ENCODE measurements at regions of chrX and their contacts with region 1.

Region 1: DNA sequence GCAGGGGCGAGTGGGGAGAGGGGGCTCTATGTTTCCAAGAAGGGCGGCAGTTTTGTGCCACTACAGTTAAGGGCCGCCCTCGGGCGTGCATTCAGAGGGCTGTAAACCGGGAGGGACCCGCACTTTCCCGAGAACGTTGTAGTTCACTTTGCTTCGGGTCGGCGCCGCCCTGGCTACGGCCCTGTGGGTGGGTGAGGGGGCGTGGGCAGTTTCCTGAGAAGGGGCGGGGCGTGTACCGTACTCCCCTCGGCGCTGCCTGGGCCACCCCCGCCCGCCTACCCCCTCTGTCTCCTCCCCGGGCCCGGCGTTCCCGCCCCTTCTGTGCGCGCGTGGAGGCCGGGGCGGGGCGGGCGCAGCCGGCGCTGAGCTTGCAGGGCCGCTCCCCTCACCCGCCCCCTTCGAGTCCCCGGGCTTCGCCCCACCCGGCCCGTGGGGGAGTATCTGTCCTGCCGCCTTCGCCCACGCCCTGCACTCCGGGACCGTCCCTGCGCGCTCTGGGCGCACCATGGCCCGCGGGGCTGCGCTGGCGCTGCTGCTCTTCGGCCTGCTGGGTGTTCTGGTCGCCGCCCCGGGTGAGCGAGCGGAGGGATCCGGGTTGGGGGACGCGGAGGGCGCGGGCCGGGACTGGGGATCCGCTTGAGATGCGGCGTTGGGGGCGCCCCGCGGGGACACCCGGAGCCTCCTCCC is at the start of gene CD99:
- DNase-seq: peak; percentile 97
- ATAC-seq: peak; percentile 97
- total RNA-seq, gene CD99: 359 TPM

Region 2: GRCh38 chrX:2325076-2325784 is 365.8 kb before region 1 on chrX:
- intact Hi-C with region 1: loop called (anchors 10 kb)
- DNase-seq: peak; percentile 65
- ATAC-seq: no peak

Region 3: DNA sequence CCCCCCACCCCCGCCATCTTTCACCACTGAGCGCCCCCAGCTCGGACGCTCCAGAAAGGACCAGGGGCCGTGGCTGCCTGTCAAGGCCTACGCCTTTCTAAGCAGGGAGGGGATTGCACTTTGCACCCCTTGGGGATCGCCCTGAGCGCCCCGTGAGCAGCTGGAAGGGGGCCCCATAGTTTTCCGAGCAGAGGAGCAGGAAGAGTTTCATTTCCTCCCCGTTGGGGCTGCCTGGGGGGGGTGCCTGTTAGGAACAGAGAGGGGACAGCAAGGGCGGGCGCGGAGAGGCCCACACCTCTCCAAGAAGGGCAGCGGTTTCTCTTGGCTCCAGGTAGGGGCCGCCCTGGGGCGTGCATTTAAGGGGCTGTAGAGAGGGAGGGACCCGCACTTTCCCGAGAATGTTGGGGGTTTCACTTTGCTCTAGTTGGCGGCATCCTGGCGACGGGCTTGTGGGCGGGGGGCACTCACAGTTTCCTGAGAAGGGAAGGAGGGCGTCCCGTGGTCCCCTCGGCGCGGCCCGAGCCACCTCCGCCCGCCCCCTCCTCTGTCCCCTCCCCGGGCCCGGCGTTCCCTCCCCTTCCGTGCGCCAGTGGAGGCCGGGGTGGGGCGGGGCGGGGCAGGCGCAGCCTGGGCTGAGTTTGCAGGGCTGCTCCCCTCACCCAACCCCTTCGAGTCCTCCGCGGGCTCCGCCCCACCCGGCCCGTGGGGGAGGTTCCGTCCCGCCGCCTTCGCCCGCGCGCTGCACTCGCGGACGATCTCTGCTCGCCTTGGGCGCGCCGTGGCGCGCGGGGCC is 82.2 kb before region 1 on chrX:
- intact Hi-C with region 1: loop called (anchors 5 kb)
- DNase-seq: peak; percentile 95
- ATAC-seq: peak; percentile 99

Region 4: DNA sequence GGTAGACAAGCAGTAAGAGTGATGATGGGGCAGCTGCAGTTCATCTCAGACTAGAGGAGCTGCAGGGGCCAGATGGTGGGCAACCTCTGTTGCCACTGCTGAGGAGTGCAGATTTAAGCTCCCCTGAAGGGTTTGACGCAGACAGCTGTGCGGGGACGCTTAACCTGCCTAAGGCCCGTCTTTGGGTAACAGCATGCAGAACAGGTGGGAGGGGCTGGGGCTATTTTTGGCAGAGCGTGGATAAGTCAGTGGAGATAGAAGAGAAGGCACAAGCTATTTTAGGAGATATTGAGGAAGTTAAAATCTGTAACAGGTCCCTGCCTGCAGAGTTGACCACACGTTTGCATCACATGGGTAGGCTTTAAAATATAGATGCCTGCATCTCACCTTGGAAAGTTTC is 10.6 kb after region 1 on chrX:
- intact Hi-C with region 1: loop called (anchors 1 kb)
- DNase-seq: no peak
- ATAC-seq: peak; percentile 49

Region 5: GRCh38 chrX:2819345-2820135 is 128.5 kb after region 1 on chrX:
- intact Hi-C with region 1: no loop called
- DNase-seq: no peak
- ATAC-seq: no peak